ENCODE measurements at regions of chr3 and their contacts with region 1.

Region 1: GRCh38 chr3:66675366-66675765 is 174.5 kb upstream of the LRIG1 start:
- DNase-seq: no peak
- ATAC-seq: no peak
- H3K4me3 ChIP-seq: no peak overlapping the region
- H3K27ac ChIP-seq: no peak overlapping the region
- H3K4me1 ChIP-seq: peaks cover 0 to 6% (median 0%) of the 10 kb centered on the region in 12 donors
- H3K27me3 ChIP-seq: no peaks in the 10 kb centered on the region
- CTCF ChIP-seq: no peak
- POLR2A ChIP-seq: no peak

Region 2: GRCh38 chr3:65277798-65278197 is 1397.6 kb before region 1 on chr3:
- intact Hi-C with region 1: no loop called
- DNase-seq: no peak
- ATAC-seq: no peak
- H3K4me3 ChIP-seq: no peak overlapping the region
- H3K27ac ChIP-seq: no peak overlapping the region
- H3K4me1 ChIP-seq: peaks cover 0 to 13% (median 0%) of the 10 kb centered on the region in 12 donors
- H3K27me3 ChIP-seq: no peaks in the 10 kb centered on the region
- CTCF ChIP-seq: no peak
- POLR2A ChIP-seq: no peak

Region 3: GRCh38 chr3:66407611-66408218 is 267.7 kb before region 1 on chr3:
- intact Hi-C with region 1: loop called in 1 of 10 experiments (anchors 10 kb)
- DNase-seq: peak; percentile 71 to 87 (median 77)
- ATAC-seq: peak in 3 of 4 donors; percentile 48 to 57 (median 57)
- H3K4me3 ChIP-seq: no peak overlapping the region
- H3K27ac ChIP-seq: peak overlapping the region in 5 of 12 donors; percentile 57 to 82 (median 73)
- H3K4me1 ChIP-seq: peaks cover 4 to 90% (median 48%) of the 10 kb centered on the region in 12 donors
- H3K27me3 ChIP-seq: no peaks in the 10 kb centered on the region
- CTCF ChIP-seq: peak; percentile 89 to 96 (median 93)
- POLR2A ChIP-seq: no peak